Calu3 (cell line): ENCODE measurements at regions of chr12 and their contacts with region 1.

Region 1: DNA sequence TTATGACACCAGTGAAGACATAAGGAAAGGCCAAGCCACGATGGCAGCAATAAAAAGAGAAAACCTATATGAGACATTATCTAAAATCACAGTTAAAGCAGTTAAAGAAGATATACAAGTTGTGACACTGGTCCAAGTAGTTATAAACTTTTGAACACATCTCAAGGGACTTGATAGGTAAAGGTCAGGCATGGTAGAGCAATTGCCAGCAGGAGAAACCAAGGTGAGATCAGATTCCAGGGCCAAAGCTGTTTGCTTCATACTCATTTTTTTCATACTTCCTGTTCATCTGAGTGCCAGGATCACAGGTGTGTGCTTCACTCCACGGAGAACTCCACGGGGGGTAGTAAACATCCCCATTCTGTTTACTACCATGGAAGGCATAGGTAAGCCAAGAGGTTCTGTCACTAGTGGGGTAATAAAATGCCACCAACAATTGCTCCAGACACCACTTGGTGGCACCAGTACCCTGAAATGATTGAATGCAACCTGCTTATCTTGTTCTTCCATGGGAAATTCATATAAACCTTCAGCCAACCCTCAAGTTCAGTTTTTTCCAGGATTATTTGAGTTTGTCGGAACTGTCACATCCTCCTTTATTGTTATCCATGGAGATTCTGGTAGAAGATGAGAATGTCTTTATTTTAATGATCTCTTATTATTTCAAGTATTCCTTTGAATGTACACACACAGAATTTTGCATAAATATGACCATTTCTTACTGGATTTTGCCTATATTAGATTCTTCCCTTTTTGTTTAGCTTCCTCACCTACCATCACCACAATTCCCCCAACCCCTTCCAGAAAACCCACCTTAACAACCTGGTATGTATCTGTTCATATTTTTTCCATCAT is 59.2 kb upstream of the TSPAN8 start:
- DNase-seq: peak; percentile 65
- H3K4me3 Mint-ChIP-seq: no peak overlapping the region
- H3K27ac Mint-ChIP-seq: peak overlapping the region; percentile 84
- H3K4me1 Mint-ChIP-seq: peaks cover 40% of the 10 kb centered on the region
- H3K27me3 Mint-ChIP-seq: no peaks in the 10 kb centered on the region
- CTCF ChIP-seq: peak; percentile 47

Region 2: GRCh38 chr12:71164568-71165197 is 52.3 kb before region 1 on chr12:
- CTCF ChIA-PET with region 1: interaction called, 4 read pairs
- intact Hi-C with region 1: loop called (anchors 2 kb)
- DNase-seq: peak; percentile 55
- H3K4me3 Mint-ChIP-seq: peak overlapping the region; percentile 62
- H3K27ac Mint-ChIP-seq: peak overlapping the region; percentile 88
- H3K4me1 Mint-ChIP-seq: peaks cover 80% of the 10 kb centered on the region
- H3K27me3 Mint-ChIP-seq: no peaks in the 10 kb centered on the region
- CTCF ChIP-seq: no peak

Region 3: DNA sequence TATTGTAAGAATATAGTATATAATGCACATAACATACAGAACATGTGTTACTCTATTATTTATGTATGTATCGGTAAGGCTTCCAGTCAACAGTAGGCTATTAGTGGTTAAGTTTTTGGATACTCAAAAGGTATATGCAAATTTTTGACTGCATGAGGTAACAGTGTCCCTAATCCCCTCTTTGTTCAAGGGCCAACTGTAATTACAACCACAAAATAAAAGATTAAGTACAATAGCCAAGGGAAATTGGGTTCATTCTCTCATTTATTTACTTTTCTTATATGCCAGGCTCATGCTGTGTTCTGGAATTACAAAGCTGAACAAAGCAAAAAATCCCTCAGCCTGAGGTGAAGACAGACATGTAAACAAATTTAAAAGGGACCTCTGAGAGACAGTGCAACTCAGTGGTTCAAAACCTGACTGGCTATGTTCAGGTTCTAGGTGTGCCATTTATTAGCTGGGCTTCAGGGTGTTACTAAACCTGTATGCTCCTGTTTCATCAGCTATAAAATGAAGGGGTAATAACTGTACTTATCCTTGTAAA is 15.7 kb before region 1 on chr12:
- CTCF ChIA-PET with region 1: no interaction called
- intact Hi-C with region 1: no loop called
- DNase-seq: no peak
- H3K4me3 Mint-ChIP-seq: no peak overlapping the region
- H3K27ac Mint-ChIP-seq: no peak overlapping the region
- H3K4me1 Mint-ChIP-seq: peaks cover 25% of the 10 kb centered on the region
- H3K27me3 Mint-ChIP-seq: no peaks in the 10 kb centered on the region
- CTCF ChIP-seq: no peak

Region 4: DNA sequence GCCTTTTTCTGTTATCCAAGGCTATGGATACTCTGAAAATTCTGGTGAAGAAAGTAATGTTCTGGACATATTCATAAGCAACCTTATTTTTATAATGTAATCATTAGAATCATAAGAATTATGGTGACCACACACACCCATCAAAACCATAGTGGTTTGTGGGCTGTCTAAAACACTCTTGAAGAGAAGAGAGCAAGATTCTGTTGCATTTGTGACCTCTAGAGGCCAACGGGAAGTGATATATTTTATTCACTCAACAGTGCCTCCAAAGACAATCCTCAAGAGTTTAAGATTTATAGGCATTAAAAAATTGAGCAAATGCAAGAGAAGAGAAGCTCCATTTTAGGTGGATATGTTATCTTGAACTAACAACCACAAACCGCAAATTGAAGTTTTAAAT is 154.2 kb after region 1 on chr12:
- CTCF ChIA-PET with region 1: no interaction called
- intact Hi-C with region 1: loop called (anchors 1 kb)
- DNase-seq: peak; percentile 6
- H3K4me3 Mint-ChIP-seq: no peak overlapping the region
- H3K27ac Mint-ChIP-seq: no peak overlapping the region
- H3K4me1 Mint-ChIP-seq: no peaks in the 10 kb centered on the region
- H3K27me3 Mint-ChIP-seq: no peaks in the 10 kb centered on the region
- CTCF ChIP-seq: peak; percentile 16

Region 5: DNA sequence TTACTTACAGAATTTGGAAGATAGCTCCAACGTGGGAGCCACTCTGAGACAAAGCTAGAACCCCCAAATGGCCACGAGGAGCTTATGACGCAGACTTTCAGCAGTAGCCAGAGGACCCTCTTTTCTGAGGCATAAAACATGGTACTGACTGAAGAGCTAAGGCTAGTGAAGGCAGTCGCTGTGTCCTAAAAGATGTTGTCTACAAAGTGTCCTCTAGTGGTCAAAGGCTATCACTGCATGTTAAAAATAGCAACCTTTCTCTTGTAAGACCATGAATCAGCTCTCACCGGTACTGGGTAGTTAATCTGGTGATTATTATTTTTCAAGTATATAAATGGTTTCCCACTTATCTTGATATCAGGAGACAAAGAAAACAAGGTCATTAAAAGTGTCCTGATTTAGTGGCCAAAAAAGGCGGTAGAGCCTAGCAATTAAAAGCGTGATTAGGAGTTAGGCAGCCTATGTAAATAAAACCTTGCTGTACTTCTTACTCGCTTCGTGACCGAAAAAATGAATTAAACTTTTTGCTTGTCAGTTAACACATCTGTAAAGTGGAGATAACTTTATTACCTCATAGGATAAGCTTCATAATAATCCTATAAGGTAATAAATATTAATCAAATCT is 175.7 kb after region 1 on chr12:
- CTCF ChIA-PET with region 1: interaction called, 5 read pairs
- intact Hi-C with region 1: loop called (anchors 1 kb)
- DNase-seq: peak; percentile 37
- H3K4me3 Mint-ChIP-seq: no peak overlapping the region
- H3K27ac Mint-ChIP-seq: no peak overlapping the region
- H3K4me1 Mint-ChIP-seq: peaks cover 8% of the 10 kb centered on the region
- H3K27me3 Mint-ChIP-seq: no peaks in the 10 kb centered on the region
- CTCF ChIP-seq: peak; percentile 80

Region 6: DNA sequence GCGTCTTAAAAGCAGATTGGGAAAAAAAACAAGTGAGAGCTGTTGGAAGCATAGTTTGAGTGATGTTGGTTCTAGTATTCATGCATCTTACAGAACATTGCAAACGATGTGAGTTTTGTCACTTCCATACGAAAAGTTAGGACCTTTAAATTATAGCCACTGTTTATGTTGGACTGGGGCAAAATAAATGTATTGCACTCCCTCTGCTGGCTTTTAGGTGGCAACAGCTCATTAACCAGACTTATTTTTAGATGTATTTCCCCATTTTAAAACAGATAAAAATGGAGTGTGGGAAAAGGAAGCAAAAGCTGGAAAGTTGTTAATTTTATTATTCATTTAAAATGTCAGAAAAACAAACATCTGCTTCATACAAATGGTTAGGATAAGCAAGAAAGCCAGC is 334.6 kb after region 1 on chr12:
- CTCF ChIA-PET with region 1: interaction called, 3 read pairs
- intact Hi-C with region 1: loop called (anchors 2 kb)
- DNase-seq: no peak
- H3K4me3 Mint-ChIP-seq: no peak overlapping the region
- H3K27ac Mint-ChIP-seq: no peak overlapping the region
- H3K4me1 Mint-ChIP-seq: peaks cover 7% of the 10 kb centered on the region
- H3K27me3 Mint-ChIP-seq: no peaks in the 10 kb centered on the region
- CTCF ChIP-seq: no peak